Prostate gland (tissue), 2 donors: ENCODE measurements at regions of chr9 and their contacts with region 1.

Region 1: GRCh38 chr9:124617471-124618141 is 110.4 kb upstream of the NR5A1 start:
- DNase-seq: peak; percentile 72
- H3K4me3 ChIP-seq: no peak overlapping the region
- H3K27ac ChIP-seq: no peak overlapping the region
- H3K4me1 ChIP-seq: no peaks in the 10 kb centered on the region
- H3K27me3 ChIP-seq: no peaks in the 10 kb centered on the region
- CTCF ChIP-seq: peak; percentile 58 to 91 (median 84)
- POLR2A ChIP-seq: no peak

Region 2: DNA sequence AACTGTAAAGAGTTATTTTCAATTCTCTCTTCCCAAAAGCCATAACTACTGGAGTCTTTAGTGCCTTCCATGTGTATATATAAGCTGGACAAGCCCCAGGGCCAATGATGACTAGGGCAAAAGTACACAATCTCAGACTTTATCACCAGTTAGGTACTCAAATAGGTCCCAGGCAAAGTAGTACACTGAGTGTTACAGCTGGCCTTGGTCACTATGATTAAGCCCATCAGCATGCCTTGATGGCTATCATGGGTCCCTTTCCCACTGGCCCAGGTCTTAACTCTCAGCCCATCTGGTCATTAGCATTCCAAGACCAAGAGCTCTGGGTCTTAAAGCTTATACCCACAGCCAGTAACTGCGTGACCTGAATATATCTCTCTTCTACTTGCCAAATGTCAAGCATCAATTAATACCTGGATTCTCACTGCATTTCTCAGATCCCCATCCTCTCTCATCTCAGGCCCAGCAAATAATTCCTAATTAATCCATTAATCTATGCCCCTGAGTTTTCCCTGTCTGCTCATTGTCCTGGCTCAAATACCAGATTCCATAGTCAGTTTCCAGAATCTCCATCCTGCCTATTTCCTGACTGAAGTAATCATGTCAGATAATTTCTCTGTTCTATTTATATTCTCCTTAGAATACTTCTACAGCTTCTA is 91.2 kb after region 1 on chr9:
- intact Hi-C with region 1: loop called (anchors 1 kb)
- DNase-seq: no peak
- H3K4me3 ChIP-seq: no peak overlapping the region
- H3K27ac ChIP-seq: no peak overlapping the region
- H3K4me1 ChIP-seq: no peaks in the 10 kb centered on the region
- H3K27me3 ChIP-seq: no peaks in the 10 kb centered on the region
- CTCF ChIP-seq: no peak
- POLR2A ChIP-seq: no peak

Region 3: GRCh38 chr9:124771021-124771866 is 153.6 kb after region 1 on chr9 and contains the start of gene NR6A1:
- intact Hi-C with region 1: no loop called
- DNase-seq: peak; percentile 97
- H3K4me3 ChIP-seq: peak within 1 kb of the TSS; percentile 88 to 93
- H3K27ac ChIP-seq: peak within 1 kb of the TSS; percentile 60 to 74
- H3K4me1 ChIP-seq: no peaks in the 10 kb centered on the region
- H3K27me3 ChIP-seq: peaks cover 2% of the 10 kb centered on the region
- CTCF ChIP-seq: peak in 3 of 4 experiments; percentile 34 to 54 (median 46)
- POLR2A ChIP-seq: peak; percentile 93
- total RNA-seq, gene NR6A1: 1.3 to 53.7 TPM